Aorta (tissue), 5 donors: ENCODE measurements at regions of chr3 and their contacts with region 1.

Region 1: GRCh38 chr3:132352541-132353143 is 35.4 kb downstream of the ACP3 start:
- DNase-seq: peak; percentile 62 to 70
- ATAC-seq: peak; percentile 88
- H3K4me3 ChIP-seq: no peak overlapping the region
- H3K27ac ChIP-seq: no peak overlapping the region
- H3K4me1 ChIP-seq: no peaks in the 10 kb centered on the region
- H3K27me3 ChIP-seq: no peaks in the 10 kb centered on the region

Region 2: DNA sequence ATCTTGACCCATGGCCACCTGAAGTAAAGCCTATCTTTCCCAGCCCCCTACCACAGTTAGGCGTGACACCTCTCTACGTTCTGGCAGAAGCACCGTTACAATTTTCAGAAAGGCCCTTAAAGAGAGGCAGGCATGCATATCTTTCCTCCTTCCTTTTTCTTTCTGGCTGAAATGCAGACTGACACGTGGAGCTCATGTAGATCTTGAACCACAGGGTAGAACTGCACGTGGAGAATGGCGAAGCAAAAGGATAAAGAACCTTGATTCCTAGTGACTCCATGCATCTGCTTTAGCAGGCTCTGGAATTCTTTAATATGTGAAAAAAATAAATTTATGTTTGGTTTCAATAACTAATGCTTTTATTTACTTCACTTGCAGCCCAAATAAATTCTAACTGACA is 484.4 kb before region 1 on chr3:
- intact Hi-C with region 1: no loop called
- DNase-seq: no peak
- ATAC-seq: no peak
- H3K4me3 ChIP-seq: no peak overlapping the region
- H3K27ac ChIP-seq: no peak overlapping the region
- H3K4me1 ChIP-seq: no peaks in the 10 kb centered on the region
- H3K27me3 ChIP-seq: no peaks in the 10 kb centered on the region

Region 3: GRCh38 chr3:132399054-132399929 is 46.6 kb after region 1 on chr3:
- intact Hi-C with region 1: loop called (anchors 1 to 5 kb)
- DNase-seq: no peak
- ATAC-seq: peak; percentile 63
- H3K4me3 ChIP-seq: no peak overlapping the region
- H3K27ac ChIP-seq: no peak overlapping the region
- H3K4me1 ChIP-seq: no peaks in the 10 kb centered on the region
- H3K27me3 ChIP-seq: no peaks in the 10 kb centered on the region

Region 4: GRCh38 chr3:132456571-132456970 is 103.9 kb after region 1 on chr3:
- intact Hi-C with region 1: loop called in 1 of 2 experiments (anchors 10 kb)
- DNase-seq: no peak
- ATAC-seq: no peak
- H3K4me3 ChIP-seq: no peak overlapping the region
- H3K27ac ChIP-seq: no peak overlapping the region
- H3K4me1 ChIP-seq: no peaks in the 10 kb centered on the region
- H3K27me3 ChIP-seq: no peaks in the 10 kb centered on the region

Region 5: DNA sequence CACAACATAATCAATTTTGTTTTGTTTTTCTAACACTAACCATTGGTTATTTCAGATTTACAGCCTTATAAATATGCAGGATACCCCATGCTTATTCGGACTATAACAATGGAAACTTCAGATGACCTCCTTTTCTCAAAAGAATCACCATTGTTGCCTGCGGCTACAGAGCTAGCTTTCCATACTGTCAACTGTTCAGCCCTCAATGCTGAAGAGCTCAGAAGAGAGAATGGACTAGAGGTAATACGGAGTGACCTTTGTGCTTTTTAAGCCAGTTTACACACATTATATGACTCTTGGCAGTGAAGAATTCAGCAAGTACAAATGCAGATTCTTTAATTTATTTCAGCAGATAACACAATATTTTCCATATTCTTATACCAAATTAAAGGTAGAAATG is 146.4 kb after region 1 on chr3:
- intact Hi-C with region 1: loop called in 1 of 2 experiments (anchors 10 kb)
- DNase-seq: no peak
- ATAC-seq: no peak
- H3K4me3 ChIP-seq: no peak overlapping the region
- H3K27ac ChIP-seq: no peak overlapping the region
- H3K4me1 ChIP-seq: peaks cover 0 to 1% of the 10 kb centered on the region in 2 donors
- H3K27me3 ChIP-seq: no peaks in the 10 kb centered on the region

Region 6: DNA sequence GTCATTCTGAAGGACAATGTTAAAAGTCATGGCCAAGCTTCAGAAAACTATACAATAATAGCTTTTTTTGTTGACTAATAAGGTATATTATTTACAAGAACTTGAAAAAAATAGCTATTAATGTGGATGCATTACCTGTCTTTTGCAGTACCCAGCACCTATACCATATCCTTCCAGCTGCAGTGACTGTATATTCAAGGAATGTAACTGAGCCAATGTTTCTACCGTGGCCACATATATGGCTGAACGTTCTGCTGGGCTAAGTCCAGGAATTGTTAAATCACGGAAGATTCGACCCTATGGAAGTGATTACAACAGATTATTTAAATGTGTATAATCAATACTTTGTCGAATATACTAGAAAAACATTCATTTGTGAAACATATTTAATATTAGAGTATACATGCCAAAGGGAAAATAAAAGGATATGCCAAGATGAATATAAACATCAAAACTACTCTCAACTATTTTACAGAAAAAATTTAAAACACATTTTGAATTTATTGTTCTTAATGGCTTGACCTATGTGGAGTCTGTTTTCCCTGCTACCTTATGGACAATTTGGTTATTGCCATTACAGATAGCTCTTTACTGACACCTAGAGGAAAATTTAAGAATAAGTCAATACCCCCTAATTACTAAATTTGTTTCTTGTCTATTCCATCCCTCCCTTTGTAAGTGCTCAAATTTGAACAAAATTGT is 289.3 kb after region 1 on chr3:
- intact Hi-C with region 1: loop called in 1 of 2 experiments (anchors 10 kb)
- DNase-seq: no peak
- ATAC-seq: peak; percentile 84
- H3K4me3 ChIP-seq: no peak overlapping the region
- H3K27ac ChIP-seq: no peak overlapping the region
- H3K4me1 ChIP-seq: no peaks in the 10 kb centered on the region
- H3K27me3 ChIP-seq: no peaks in the 10 kb centered on the region